SK-N-SH (cell line): ENCODE measurements at regions of chr1 and their contacts with region 1.

Region 1: GRCh38 chr1:98794196-98794886 is 132.8 kb downstream of the SNX7 start:
- DNase-seq: peak; percentile 54
- H3K4me3 ChIP-seq: peak overlapping the region in 1 of 2 experiments; percentile 26; a peak in 1 of 4 replicates
- H3K27ac ChIP-seq: peak overlapping the region in 1 of 2 experiments; percentile 60; a peak in 1 of 4 replicates
- H3K4me1 ChIP-seq: peaks cover 0 to 4% of the 10 kb centered on the region in 2 experiments; a peak in 2 of 4 replicates
- H3K27me3 ChIP-seq: no peaks in the 10 kb centered on the region
- CTCF ChIP-seq: peak; percentile 87
- EP300 ChIP-seq: peak in 1 of 2 experiments; percentile 86; a peak in 2 of 4 replicates
- RAD21 ChIP-seq: peak; percentile 95

Region 2: GRCh38 chr1:98769162-98769561 is 25.2 kb before region 1 on chr1:
- CTCF ChIA-PET with region 1: interaction called, 10 read pairs
- POLR2A ChIA-PET with region 1: no interaction called
- DNase-seq: no peak
- H3K4me3 ChIP-seq: no peak overlapping the region
- H3K27ac ChIP-seq: no peak overlapping the region
- H3K4me1 ChIP-seq: no peaks in the 10 kb centered on the region; a peak in 2 of 4 replicates
- H3K27me3 ChIP-seq: no peaks in the 10 kb centered on the region
- CTCF ChIP-seq: no peak
- EP300 ChIP-seq: no peak
- RAD21 ChIP-seq: no peak

Region 3: DNA sequence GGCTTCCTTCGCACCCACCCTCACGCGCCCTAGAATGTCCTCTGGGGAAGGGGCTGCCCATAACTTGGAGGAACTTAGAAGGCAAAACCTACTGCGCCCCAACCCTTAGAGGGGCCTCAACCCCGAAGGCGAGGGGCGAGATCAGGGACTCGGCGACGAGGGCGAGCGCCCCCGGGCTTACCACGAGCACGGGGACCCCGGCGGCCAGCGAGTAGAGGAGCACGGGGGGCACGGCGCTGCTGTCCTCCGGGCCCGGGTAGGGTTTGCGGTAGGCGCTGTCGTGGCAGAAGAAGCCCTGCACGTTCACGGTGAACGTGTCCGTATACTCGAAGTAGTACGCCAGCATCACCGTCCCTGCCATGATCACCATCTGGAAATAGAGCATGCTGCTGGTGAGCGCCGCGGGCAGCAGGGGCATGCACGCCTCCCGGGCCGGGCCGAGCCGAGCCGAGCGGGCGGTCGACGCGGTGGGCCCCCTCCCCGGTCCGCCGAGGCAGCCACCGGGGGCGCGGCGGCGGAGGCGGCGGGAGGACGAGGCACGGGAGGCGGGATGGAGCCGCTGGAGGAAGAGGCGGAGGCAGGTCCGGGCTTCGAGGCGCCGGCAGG is 210.0 kb after region 1 on chr1:
- CTCF ChIA-PET with region 1: interaction called, 30 read pairs
- POLR2A ChIA-PET with region 1: interaction called, 3 read pairs
- DNase-seq: no peak
- H3K4me3 ChIP-seq: peak overlapping the region; percentile 56 to 64
- H3K27ac ChIP-seq: peak overlapping the region in 1 of 2 experiments; percentile 93; a peak in 2 of 4 replicates
- H3K4me1 ChIP-seq: peaks cover 0 to 8% of the 10 kb centered on the region in 2 experiments; a peak in 1 of 4 replicates
- H3K27me3 ChIP-seq: peaks cover 31% of the 10 kb centered on the region
- CTCF ChIP-seq: no peak
- EP300 ChIP-seq: no peak
- RAD21 ChIP-seq: no peak

Region 4: GRCh38 chr1:99180343-99180808 is 386.0 kb after region 1 on chr1:
- CTCF ChIA-PET with region 1: interaction called, 12 read pairs
- POLR2A ChIA-PET with region 1: no interaction called
- DNase-seq: peak; percentile 25
- H3K4me3 ChIP-seq: no peak overlapping the region
- H3K27ac ChIP-seq: peak overlapping the region; percentile 63 to 98; a peak in 3 of 4 replicates
- H3K4me1 ChIP-seq: peaks cover 11 to 26% of the 10 kb centered on the region in 2 experiments
- H3K27me3 ChIP-seq: no peaks in the 10 kb centered on the region
- CTCF ChIP-seq: peak; percentile 89
- EP300 ChIP-seq: no peak
- RAD21 ChIP-seq: peak; percentile 96

Region 5: GRCh38 chr1:99526926-99527477 is 732.7 kb after region 1 on chr1:
- CTCF ChIA-PET with region 1: interaction called, 15 read pairs
- POLR2A ChIA-PET with region 1: no interaction called
- DNase-seq: peak; percentile 8
- H3K4me3 ChIP-seq: no peak overlapping the region
- H3K27ac ChIP-seq: no peak overlapping the region; a peak in 1 of 4 replicates
- H3K4me1 ChIP-seq: peaks cover 0 to 3% of the 10 kb centered on the region in 2 experiments; a peak in 2 of 4 replicates
- H3K27me3 ChIP-seq: no peaks in the 10 kb centered on the region
- CTCF ChIP-seq: peak; percentile 58
- EP300 ChIP-seq: no peak
- RAD21 ChIP-seq: peak; percentile 68